Activated CD8-positive, alpha-beta T cell treated with anti-CD3 and anti-CD28 coated beads, Interleukin-2, amount 10 ng/mL, durations not matched to agents 7 days and 5 days (primary cell): ENCODE measurements at regions of chr7 and their contacts with region 1.

Region 1: GRCh38 chr7:142873281-142873787 is 12.2 kb downstream of the TRPV6 start:
- DNase-seq: peak; percentile 45
- ATAC-seq: peak; percentile 43
- H3K4me3 Mint-ChIP-seq: no peak overlapping the region
- H3K27ac Mint-ChIP-seq: no peak overlapping the region
- H3K4me1 Mint-ChIP-seq: no peaks in the 10 kb centered on the region
- H3K27me3 Mint-ChIP-seq: no peaks in the 10 kb centered on the region

Region 2: DNA sequence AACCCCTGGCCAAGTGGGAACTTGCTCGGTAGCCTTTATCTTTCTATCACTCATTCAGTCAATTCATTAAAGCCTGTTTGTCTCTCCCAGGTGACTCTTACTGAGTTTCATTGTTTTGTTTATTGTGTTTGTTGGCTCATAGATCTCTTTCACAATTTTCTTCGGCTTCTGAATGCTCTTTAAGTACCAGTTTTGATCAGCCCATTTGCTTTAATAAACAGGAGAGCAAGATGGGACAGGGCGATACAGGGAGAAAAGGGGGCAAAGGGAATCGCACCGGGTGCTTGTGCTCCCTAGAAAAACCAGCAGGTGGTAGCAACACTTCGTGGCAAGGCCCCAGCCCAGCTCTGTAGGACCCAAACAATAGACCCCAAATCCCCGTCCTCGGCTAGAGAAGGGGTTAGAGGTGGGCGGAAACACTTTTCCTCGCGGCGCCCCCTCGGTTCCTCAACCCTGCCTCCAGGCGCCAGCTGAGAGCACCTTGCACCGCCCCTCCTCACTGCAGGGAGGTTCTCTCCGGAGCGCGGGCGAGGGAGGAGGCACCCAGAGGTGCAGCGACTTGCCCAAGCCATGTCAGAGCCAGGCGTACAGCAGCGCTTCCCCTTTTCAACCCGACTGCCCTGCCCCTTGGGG is 19.5 kb before region 1 on chr7:
- CTCF ChIA-PET with region 1: interaction called, 19 read pairs
- POLR2A ChIA-PET with region 1: interaction called, 3 read pairs
- DNase-seq: peak; percentile 77
- ATAC-seq: peak; percentile 87
- H3K4me3 Mint-ChIP-seq: peak overlapping the region; percentile 92
- H3K27ac Mint-ChIP-seq: peak overlapping the region; percentile 47
- H3K4me1 Mint-ChIP-seq: peaks cover 3% of the 10 kb centered on the region
- H3K27me3 Mint-ChIP-seq: peaks cover 22% of the 10 kb centered on the region

Region 3: DNA sequence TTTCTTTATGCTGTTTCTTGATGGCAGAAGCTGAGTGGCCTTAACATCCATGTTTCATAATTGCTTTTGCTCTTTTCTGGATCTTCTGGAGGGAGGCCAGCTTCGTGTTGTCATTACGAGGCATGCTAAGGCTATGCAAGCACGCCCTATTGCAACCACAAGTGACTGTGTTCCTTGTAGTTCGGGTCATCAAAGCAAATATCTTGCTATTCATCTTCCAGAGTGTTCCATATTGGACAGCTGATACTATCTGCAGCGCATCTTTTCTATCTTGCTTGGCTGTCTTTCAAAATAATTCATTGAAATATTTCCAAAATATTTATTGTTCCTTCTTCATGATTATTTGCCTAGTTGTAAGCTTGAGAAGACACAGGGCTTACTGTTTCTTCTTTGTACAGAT is 13.5 kb before region 1 on chr7:
- CTCF ChIA-PET with region 1: interaction called, 23 read pairs
- POLR2A ChIA-PET with region 1: no interaction called
- DNase-seq: peak; percentile 12
- ATAC-seq: no peak
- H3K4me3 Mint-ChIP-seq: no peak overlapping the region
- H3K27ac Mint-ChIP-seq: no peak overlapping the region
- H3K4me1 Mint-ChIP-seq: no peaks in the 10 kb centered on the region
- H3K27me3 Mint-ChIP-seq: peaks cover 17% of the 10 kb centered on the region

Region 4: DNA sequence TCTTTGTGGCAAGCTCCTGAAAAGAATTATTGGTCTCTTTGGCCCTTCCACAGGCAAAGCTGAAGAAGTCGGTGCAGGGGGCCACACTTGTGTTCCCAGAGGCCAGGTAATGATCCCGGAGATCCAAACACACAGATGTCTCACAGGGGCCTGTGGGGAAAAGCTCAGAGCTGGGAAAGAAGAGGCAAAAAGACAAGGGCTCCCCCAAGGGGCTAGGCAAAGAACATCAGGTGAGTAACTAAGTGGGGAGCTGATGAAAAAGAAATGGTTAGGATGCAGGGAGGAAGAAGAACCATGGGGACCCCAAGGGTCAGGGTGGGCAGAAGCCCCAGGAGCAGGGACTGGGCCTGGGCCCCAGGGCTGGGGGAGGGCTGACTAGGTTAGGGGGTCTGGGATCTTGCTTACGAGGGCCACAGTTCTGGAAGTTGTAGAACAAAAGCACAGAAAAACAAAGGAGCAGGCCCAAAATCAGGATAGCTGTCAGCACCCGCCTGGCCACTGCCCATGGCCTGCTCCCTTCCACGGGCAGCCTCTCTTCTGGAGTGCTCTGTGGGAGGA is 87.7 kb after region 1 on chr7:
- CTCF ChIA-PET with region 1: interaction called, 10 read pairs
- POLR2A ChIA-PET with region 1: no interaction called
- DNase-seq: no peak
- ATAC-seq: no peak
- H3K4me3 Mint-ChIP-seq: no peak overlapping the region
- H3K27ac Mint-ChIP-seq: no peak overlapping the region
- H3K4me1 Mint-ChIP-seq: no peaks in the 10 kb centered on the region
- H3K27me3 Mint-ChIP-seq: peaks cover 20% of the 10 kb centered on the region

Region 5: DNA sequence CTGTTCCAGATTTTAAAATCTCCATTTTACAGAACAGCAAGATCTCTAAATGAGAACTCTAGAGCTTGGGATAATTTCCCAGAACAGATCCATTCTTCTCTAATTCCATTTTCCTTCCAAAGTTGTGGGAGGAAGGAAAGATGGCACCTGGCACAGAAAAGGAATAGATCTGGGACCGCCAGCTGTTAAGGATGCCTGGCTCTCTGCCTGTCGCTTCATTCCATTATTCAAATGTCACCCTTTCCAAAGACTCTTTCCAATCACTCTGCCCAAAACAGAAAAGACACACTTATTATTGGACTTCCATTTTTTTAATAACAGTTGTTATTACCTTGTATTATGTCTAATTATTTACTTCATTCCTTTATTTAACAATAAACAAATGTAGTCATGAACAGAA is 154.3 kb after region 1 on chr7:
- CTCF ChIA-PET with region 1: no interaction called
- POLR2A ChIA-PET with region 1: no interaction called
- DNase-seq: no peak
- ATAC-seq: no peak
- H3K4me3 Mint-ChIP-seq: no peak overlapping the region
- H3K27ac Mint-ChIP-seq: no peak overlapping the region
- H3K4me1 Mint-ChIP-seq: peaks cover 6% of the 10 kb centered on the region
- H3K27me3 Mint-ChIP-seq: peaks cover 3% of the 10 kb centered on the region